ENCODE measurements at regions of chr19 and their contacts with region 1.

Region 1: GRCh38 chr19:1672038-1672768 is 19.8 kb upstream of the TCF3 start:
- DNase-seq: peak; percentile 90
- H3K4me3 ChIP-seq: peak overlapping the region in 7 of 8 donors; percentile 2 to 66 (median 26)
- H3K27ac ChIP-seq: peak overlapping the region in 2 of 8 donors; percentile 8 to 46
- H3K4me1 ChIP-seq: peaks cover 19 to 63% (median 40%) of the 10 kb centered on the region in 6 donors
- H3K27me3 ChIP-seq: peaks cover 3 to 93% (median 77%) of the 10 kb centered on the region in 7 donors
- CTCF ChIP-seq: peak; percentile 68 to 96 (median 86)
- POLR2A ChIP-seq: no peak

Region 2: DNA sequence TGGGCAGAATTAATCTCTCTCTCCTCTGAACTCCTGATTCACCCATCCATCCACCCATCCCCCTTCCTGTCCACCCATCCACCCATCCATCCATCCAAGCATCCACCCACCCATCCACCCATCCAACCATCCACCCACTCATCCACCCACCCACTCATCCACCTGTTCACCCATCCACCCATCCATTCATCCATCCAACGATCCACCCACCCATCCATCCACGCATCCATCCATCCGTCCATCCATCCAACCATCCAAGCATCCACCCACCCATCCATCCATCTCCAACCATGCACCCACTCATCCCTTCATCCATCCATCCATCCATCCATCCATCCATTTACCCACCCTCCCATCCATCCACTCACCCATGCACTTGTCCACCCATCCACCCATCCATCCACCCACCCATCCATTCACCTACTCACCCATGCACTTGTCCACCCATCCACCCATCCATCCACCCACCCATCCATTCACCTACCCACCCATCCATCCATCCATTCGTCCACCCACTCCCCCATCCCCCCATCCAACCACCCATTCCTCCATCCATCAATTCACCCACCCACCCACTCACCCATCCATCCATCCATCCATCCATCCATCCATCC is 122.8 kb before region 1 on chr19:
- intact Hi-C with region 1: loop called (anchors 5 kb)
- DNase-seq: no peak
- H3K4me3 ChIP-seq: no peak overlapping the region
- H3K27ac ChIP-seq: no peak overlapping the region
- H3K4me1 ChIP-seq: peaks cover 0 to 9% (median 5%) of the 10 kb centered on the region in 6 donors
- H3K27me3 ChIP-seq: peaks cover 0 to 61% (median 7%) of the 10 kb centered on the region in 7 donors
- CTCF ChIP-seq: no peak
- POLR2A ChIP-seq: no peak

Region 3: DNA sequence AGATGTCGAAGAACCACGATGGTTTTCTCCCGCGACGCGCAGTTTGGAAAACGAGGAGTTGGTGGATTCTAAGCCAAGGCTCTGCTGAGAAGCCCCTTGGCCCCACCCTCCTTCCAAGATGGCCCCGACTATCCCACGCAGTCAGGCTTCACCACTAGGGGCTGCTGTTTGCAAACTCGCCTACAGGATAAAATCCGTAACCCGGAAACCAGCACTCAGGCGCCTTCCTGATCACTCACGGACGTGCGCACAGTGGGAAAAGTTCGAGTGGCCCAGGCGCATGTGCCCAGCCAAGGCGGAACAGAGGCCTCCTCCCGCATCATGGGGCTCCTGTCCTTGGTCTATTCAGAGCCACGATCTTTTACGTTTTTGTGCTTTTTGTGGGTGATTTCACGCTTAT is 47.7 kb before region 1 on chr19:
- intact Hi-C with region 1: loop called (anchors 10 kb)
- DNase-seq: peak; percentile 86
- H3K4me3 ChIP-seq: no peak overlapping the region
- H3K27ac ChIP-seq: peak overlapping the region in 5 of 8 donors; percentile 19 to 57 (median 38)
- H3K4me1 ChIP-seq: peaks cover 0 to 18% (median 6%) of the 10 kb centered on the region in 6 donors
- H3K27me3 ChIP-seq: no peaks in the 10 kb centered on the region
- CTCF ChIP-seq: peak; percentile 67 to 89 (median 80)
- POLR2A ChIP-seq: no peak

Region 4: DNA sequence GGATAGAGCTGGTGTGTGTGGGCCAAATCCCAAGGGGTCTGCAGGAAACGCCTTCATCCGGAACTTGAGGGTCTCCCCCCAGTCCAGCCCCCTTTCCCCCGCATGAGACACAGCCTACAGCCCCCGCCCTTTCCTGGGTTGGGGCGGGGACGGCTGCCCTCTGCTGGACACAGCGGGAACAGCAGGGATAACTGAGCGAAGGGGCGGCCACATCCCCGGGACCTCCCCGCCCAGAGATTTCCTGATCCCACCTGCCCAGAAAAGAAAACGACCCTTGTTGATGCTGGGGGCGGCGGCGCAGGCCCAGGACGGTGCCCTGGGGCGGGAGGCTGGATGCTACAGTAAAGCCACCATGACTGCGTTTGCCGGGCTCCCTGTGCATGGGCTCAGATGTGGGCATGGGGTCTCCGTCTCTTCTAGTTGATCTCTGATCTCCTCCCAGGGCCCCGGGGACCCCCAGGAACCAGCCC is 95.3 kb after region 1 on chr19:
- intact Hi-C with region 1: loop called (anchors 10 kb)
- DNase-seq: peak; percentile 87
- H3K4me3 ChIP-seq: no peak overlapping the region
- H3K27ac ChIP-seq: no peak overlapping the region
- H3K4me1 ChIP-seq: peaks cover 0 to 17% (median 6%) of the 10 kb centered on the region in 6 donors
- H3K27me3 ChIP-seq: peaks cover 12 to 100% (median 92%) of the 10 kb centered on the region in 7 donors
- CTCF ChIP-seq: peak; percentile 82 to 97 (median 90)
- POLR2A ChIP-seq: no peak